PC-9 (cell line): ENCODE measurements at regions of chr3 and their contacts with region 1.

Region 1: DNA sequence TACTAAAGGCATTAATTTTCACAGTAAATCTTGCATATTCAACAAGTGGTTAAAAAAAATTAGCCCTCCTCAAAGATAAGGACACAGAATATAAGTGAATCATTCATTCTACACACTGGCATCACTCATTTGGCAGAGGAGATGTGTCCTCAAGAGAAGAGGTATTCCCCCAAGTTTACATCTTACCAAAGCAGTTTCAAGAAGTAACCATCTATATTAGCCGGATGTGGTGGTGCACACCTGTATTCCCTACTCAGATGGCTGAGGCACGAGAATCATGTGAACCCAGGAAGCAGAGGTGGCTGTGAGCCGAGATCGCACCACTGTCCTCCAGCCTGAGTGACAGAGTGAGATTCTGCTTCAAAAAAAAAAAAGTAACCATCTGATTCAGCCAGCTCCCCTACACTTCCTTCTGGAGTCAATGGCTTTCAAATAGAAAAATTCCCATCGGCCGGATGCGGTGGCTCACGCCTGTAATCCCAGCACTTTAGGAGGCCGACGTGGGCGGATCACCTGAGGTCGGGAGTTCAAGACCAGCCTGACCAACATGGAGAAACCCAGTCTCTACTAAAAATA is 15.4 kb downstream of the RAF1 start:
- DNase-seq: no peak
- H3K4me3 ChIP-seq: no peak overlapping the region
- H3K27ac ChIP-seq: peak overlapping the region; percentile 62
- H3K4me1 ChIP-seq: peaks cover 18% of the 10 kb centered on the region
- H3K27me3 ChIP-seq: no peaks in the 10 kb centered on the region
- CTCF ChIP-seq: no peak

Region 2: DNA sequence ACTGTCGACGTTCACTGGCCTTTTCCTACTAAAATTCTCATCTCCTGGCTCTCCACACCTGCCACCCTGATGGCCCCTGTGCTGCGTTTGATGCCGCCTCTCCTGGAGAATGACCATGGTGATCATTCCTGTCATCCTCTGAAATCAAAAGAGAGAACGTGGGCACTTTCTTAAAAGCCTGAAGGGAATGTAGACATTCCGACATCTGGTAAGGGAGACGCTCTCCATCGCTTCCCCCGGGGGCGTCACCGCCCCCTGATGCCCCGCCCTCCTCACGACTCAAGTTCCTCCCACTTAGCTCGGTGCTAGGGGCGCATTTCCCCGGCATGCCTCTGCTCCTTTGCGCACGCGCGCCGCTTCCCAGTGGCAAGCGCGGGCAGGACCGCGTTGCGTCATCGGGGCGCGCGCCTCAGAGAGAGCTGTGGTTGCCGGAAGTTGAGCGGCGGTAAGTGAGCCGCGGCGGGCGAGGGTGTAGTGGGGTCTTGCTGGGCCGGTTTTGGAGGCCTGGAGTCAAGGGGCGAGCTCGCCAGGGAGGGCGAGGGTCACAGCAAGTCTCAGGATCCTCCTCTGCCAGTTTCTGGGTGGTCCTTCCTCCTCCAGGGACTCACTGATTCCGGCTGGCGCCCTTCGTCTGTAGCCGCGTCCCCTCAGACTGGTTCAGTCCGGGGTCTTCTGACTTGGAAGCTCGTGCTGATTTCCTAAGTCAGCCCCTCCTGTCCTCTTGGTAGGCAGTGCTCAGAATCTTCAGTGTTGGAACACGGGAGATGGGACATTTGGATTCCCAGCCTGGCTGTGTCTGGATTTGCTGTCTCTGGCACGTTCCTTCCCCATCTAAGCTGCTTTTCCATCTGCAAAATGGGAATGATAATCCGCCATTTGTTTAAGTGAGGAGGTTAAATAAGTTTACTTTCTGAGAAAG is 1376.2 kb before region 1 on chr3 and contains the start of gene ATG7:
- CTCF ChIA-PET with region 1: interaction called, 10 read pairs
- POLR2A ChIA-PET with region 1: no interaction called
- intact Hi-C with region 1: no loop called
- DNase-seq: peak; percentile 86 to 95
- H3K4me3 ChIP-seq: peak within 1 kb of the TSS; percentile 98
- H3K27ac ChIP-seq: peak within 1 kb of the TSS; percentile 58
- H3K4me1 ChIP-seq: peaks cover 16% of the 10 kb centered on the region
- H3K27me3 ChIP-seq: no peaks in the 10 kb centered on the region
- CTCF ChIP-seq: no peak
- total RNA-seq, gene ATG7: 53.1 and 56.1 TPM in 2 replicates

Region 3: DNA sequence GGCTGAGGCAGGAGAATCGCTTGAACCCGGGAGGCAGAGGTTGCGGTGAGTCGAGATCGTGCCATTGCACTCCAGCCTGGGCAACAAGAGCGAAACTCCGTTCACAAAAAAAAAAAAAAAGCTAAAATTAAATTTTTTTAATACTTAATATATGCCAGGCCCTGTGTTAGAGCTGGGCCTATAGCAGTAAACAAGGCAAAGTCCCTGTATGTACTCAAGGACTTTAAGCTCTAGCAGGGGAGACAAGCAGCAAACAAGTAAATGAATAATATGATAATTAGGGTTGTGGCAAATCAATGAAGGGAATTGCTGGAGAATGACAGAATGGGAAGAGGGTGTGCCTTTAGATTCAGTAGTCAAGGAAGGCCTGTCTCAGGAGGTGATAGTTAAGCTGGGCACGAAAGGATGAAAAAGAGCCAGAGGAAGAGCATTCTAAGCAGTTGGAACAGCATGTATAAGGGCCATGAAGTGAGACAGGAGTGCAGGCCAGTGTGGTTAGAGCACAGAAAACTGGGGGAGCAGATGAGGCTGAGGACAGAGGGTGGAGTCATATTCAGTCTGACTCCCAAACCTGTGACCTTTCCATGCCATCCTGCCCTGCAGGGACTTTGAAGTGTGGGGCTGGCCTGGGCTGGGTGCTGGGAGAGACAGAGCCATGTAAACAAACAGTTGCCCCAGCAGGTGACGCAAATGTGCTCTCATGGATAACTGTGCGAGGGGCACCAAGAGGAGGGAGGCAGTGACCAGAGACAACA is 22.1 kb after region 1 on chr3:
- CTCF ChIA-PET with region 1: no interaction called
- POLR2A ChIA-PET with region 1: no interaction called
- intact Hi-C with region 1: no loop called
- DNase-seq: no peak
- H3K4me3 ChIP-seq: no peak overlapping the region
- H3K27ac ChIP-seq: no peak overlapping the region
- H3K4me1 ChIP-seq: no peaks in the 10 kb centered on the region
- H3K27me3 ChIP-seq: no peaks in the 10 kb centered on the region
- CTCF ChIP-seq: no peak